H1 (cell line): ENCODE measurements at regions of chr19 and their contacts with region 1.

Region 1: DNA sequence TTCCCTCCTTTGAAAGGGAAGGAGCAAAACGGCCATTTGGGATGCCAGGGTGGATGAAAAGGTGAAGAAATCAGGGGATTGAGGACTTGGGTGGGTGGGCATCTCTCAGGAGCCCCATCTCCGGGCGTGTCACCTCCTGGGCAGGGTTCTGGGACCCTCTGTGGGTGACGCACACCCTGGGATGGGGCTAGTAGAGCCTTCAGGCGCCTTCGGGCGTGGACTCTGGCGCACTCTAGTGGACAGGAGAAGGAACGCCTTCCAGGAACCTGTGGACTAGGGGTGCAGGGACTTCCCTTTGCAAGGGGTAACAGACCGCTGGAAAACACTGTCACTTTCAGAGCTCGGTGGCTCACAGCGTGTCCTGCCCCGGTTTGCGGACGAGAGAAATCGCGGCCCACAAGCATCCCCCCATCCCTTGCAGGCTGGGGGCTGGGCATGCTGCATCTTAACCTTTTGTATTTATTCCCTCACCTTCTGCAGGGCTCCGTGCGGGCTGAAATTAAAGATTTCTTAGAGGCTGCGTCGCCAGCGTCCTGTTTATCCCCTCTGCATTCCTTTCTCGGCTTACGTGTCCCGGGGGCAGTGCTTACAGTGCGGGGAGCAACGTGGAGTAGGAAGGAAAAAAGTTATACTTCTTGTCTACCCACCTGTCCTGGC is 15.2 kb upstream of the S1PR4 start:
- DNase-seq: peak; percentile 53 to 85
- H3K4me3 ChIP-seq: peak overlapping the region in 3 of 4 experiments; percentile 36 to 54 (median 53); a peak in 6 of 8 replicates
- H3K27ac ChIP-seq: no peak overlapping the region
- H3K4me1 ChIP-seq: peaks cover 0 to 3% (median under 1%) of the 10 kb centered on the region in 4 experiments; a peak in 2 of 7 replicates
- H3K27me3 ChIP-seq: peaks cover 0 to 5% (median 2%) of the 10 kb centered on the region in 4 experiments; a peak in 3 of 7 replicates
- CTCF ChIP-seq: peak; percentile 94 to 97 (median 97)
- EP300 ChIP-seq: no peak
- POLR2A ChIP-seq: no peak
- RAD21 ChIP-seq: peak; percentile 95 to 97

Region 2: GRCh38 chr19:3146677-3147100 is 16.7 kb before region 1 on chr19:
- CTCF ChIA-PET with region 1: interaction called, 52 read pairs
- POLR2A ChIA-PET with region 1: interaction called, 4 read pairs
- DNase-seq: peak in 1 of 2 experiments; percentile 96
- H3K4me3 ChIP-seq: no peak overlapping the region
- H3K27ac ChIP-seq: no peak overlapping the region
- H3K4me1 ChIP-seq: peaks cover 0 to 5% (median 2%) of the 10 kb centered on the region in 4 experiments; a peak in 1 of 7 replicates
- H3K27me3 ChIP-seq: no peaks in the 10 kb centered on the region; a peak in 1 of 7 replicates
- CTCF ChIP-seq: peak; percentile 81 to 95 (median 90)
- EP300 ChIP-seq: no peak
- POLR2A ChIP-seq: no peak
- RAD21 ChIP-seq: peak; percentile 34 to 48; a peak in 2 of 4 replicates

Region 3: DNA sequence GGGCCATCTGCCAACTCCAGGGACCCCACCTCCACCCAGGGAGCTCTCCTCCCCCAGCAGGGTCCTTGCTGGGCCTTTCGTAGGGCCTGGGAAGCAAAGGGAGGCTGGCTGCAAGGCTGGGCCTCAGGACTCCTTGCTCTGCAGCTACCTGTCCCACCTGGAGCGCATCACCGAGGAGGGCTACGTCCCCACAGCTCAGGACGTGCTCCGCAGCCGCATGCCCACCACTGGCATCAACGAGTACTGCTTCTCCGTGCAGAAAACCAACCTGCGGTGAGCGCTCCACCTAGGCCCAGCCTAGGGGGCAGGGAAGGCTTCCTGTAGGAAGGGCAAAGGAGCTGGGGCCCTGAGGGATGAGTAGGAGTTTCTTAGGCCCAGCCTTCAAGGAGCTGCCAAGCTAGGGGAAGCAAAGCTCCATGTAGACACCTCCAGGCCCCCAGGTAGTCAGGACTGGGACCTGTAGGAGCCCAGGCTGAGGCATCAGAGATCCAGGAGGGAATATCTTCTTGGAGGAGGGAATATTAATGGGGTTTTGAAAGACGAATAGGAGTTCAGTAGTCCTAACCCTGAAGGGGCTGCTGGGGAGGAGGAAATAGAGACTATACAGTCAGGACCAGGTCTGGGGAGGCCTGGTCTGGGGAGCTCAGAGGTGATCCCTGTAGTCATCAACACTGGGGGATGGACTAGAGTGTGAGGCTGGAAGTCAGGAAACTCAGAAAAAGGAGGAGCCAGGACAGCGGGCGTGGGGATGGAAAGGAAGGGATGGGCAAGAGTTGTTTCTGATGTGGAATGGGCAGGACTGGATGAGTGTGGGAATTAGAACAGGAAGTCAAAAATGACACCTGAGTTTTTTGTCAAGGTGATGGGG is 11.6 kb before region 1 on chr19:
- CTCF ChIA-PET with region 1: interaction called, 52 read pairs
- POLR2A ChIA-PET with region 1: interaction called, 3 read pairs
- DNase-seq: no peak
- H3K4me3 ChIP-seq: no peak overlapping the region
- H3K27ac ChIP-seq: no peak overlapping the region
- H3K4me1 ChIP-seq: peaks cover 0 to 9% (median 2%) of the 10 kb centered on the region in 4 experiments; a peak in 1 of 7 replicates
- H3K27me3 ChIP-seq: no peaks in the 10 kb centered on the region; a peak in 1 of 7 replicates
- CTCF ChIP-seq: no peak
- EP300 ChIP-seq: no peak
- POLR2A ChIP-seq: no peak
- RAD21 ChIP-seq: no peak

Region 4: GRCh38 chr19:3224346-3225168 is 61.2 kb after region 1 on chr19 and contains the start of gene CELF5:
- CTCF ChIA-PET with region 1: no interaction called
- POLR2A ChIA-PET with region 1: no interaction called
- DNase-seq: peak in 1 of 2 experiments; percentile 86
- H3K4me3 ChIP-seq: peak within 1 kb of the TSS; percentile 57 to 92 (median 68)
- H3K27ac ChIP-seq: no peak within 1 kb of the TSS
- H3K4me1 ChIP-seq: peaks cover 6 to 15% (median 9%) of the 10 kb centered on the region in 4 experiments
- H3K27me3 ChIP-seq: peaks cover 0 to 3% (median 0%) of the 10 kb centered on the region in 4 experiments; a peak in 1 of 7 replicates
- CTCF ChIP-seq: peak; percentile 52 to 75 (median 72)
- EP300 ChIP-seq: no peak
- POLR2A ChIP-seq: no peak
- RAD21 ChIP-seq: peak in 1 of 2 experiments; percentile 53; a peak in 2 of 4 replicates
- total RNA-seq, gene CELF5: 9.8 and 9.9 TPM in 2 replicates